Activated T-helper 2 cell treated with anti-CD3 and anti-CD28 coated beads, Interferon-gamma antibody, Interleukin-2, Interleukin-4, amounts not matched to agents 10 μg/mL and 5 μg/mL and 100 μg/mL, durations not matched to agents 14 hours and 24 hours and 36 hours (primary cell): ENCODE measurements at regions of chr22 and their contacts with region 1.

Region 1: GRCh38 chr22:41403532-41404318 is 22.0 kb downstream of the TEF start:
- DNase-seq: peak; percentile 82
- H3K4me3 Mint-ChIP-seq: no peak overlapping the region
- H3K27ac Mint-ChIP-seq: no peak overlapping the region
- H3K4me1 Mint-ChIP-seq: peaks cover 11% of the 10 kb centered on the region
- H3K27me3 Mint-ChIP-seq: no peaks in the 10 kb centered on the region

Region 2: DNA sequence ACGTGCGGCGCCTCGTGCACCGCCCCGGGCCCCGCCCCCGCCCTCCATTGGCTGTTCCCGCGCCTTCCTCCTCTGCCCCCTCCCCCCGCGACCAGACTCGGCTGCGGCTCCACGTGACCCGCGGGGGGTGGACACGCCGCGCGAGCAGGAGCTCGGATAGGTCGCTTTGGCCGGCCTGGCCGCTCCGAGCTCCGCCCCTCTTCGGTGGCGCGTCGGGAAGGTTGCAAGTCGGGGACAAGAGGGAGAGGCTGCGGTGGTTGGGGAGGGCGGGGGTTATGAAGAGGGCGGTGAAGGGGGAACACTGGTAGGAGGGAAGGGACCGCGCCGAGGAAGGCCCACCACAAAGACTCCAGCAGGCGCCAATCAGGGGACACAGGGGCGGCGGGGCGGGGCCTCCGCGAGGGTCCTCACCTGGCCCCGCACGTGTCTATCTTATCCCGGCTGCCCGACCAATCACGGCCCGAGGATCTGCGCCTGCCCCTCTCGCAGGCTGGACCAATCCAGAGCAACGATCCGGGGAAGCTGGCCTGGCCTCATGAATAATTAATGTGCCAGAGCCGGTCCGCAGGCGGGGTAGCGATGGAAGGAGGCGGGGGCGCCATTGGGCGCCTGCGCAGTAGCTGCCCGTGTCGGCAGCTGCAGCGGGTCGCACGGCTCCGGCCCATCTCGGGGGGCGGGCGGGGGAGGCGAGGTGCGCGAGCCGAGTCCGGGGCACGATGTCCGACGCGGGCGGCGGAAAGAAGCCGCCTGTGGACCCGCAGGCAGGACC is 22.2 kb before region 1 on chr22 and contains the start of gene TEF:
- intact Hi-C with region 1: no loop called
- DNase-seq: peak; percentile 97
- H3K4me3 Mint-ChIP-seq: peak within 1 kb of the TSS; percentile 87
- H3K27ac Mint-ChIP-seq: peak within 1 kb of the TSS; percentile 91
- H3K4me1 Mint-ChIP-seq: peaks cover 6% of the 10 kb centered on the region
- H3K27me3 Mint-ChIP-seq: peaks cover 4% of the 10 kb centered on the region
- total RNA-seq, gene TEF: 1.7 and 1.9 TPM in 2 replicates

Region 3: DNA sequence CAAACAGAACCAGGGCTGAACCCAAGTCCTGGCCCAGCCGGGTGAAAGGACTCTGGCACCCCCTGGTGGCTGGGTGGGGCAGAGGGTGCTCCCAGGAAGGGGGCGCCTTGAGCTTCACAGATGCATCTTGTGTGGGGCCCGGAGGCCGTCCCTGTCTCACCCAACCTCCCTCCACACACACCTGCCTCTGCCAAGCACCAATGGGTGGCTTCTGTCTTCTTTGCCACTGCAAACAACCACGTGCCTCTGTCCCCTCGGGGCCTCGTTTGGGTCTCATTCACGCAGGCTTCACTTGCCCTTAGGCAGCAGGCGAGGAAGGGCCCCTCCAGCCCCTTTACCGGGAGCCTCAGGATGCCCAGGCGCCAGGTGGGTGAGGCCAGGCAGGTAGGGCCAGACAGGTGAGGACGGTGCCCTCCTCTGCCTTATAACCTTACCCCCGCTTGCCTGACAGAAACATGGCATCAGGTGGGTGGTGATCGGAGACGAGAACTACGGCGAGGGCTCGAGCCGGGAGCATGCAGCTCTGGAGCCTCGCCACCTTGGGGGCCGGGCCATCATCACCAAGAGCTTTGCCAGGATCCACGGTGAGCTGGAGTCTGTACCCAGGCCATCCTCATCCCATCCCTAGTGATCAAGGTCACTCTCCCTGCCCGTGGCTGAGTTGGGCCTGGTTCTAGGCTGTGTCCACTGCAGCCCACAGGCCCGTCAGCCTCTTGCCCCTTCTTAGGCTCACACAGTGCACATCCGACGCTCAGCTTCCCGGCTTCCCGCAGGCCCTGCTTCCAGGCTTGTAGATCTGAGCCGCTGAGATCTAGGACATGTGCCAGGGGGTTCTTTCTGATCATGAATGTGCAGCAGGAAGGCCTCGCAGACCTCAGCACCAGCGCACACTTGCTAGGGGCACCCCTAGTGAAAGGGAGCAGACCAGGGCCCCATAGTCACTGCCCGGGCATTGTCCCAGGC is 123.4 kb after region 1 on chr22:
- intact Hi-C with region 1: loop called (anchors 2 kb)
- DNase-seq: peak; percentile 46
- H3K4me3 Mint-ChIP-seq: no peak overlapping the region
- H3K27ac Mint-ChIP-seq: no peak overlapping the region
- H3K4me1 Mint-ChIP-seq: peaks cover 3% of the 10 kb centered on the region
- H3K27me3 Mint-ChIP-seq: no peaks in the 10 kb centered on the region